ENCODE measurements at regions of chr14 and their contacts with region 1.

Region 1: GRCh38 chr14:102086972-102087761 is at the start of gene HSP90AA1:
- DNase-seq: peak; percentile 95
- ATAC-seq: peak; percentile 69
- H3K4me3 Mint-ChIP-seq: peak within 1 kb of the TSS; percentile 93
- H3K27ac Mint-ChIP-seq: peak within 1 kb of the TSS; percentile 88
- H3K4me1 Mint-ChIP-seq: peaks cover 60% of the 10 kb centered on the region
- H3K27me3 Mint-ChIP-seq: no peaks in the 10 kb centered on the region
- CTCF ChIP-seq: no peak
- total RNA-seq, gene HSP90AA1: 431 and 435 TPM in 2 replicates

Region 2: DNA sequence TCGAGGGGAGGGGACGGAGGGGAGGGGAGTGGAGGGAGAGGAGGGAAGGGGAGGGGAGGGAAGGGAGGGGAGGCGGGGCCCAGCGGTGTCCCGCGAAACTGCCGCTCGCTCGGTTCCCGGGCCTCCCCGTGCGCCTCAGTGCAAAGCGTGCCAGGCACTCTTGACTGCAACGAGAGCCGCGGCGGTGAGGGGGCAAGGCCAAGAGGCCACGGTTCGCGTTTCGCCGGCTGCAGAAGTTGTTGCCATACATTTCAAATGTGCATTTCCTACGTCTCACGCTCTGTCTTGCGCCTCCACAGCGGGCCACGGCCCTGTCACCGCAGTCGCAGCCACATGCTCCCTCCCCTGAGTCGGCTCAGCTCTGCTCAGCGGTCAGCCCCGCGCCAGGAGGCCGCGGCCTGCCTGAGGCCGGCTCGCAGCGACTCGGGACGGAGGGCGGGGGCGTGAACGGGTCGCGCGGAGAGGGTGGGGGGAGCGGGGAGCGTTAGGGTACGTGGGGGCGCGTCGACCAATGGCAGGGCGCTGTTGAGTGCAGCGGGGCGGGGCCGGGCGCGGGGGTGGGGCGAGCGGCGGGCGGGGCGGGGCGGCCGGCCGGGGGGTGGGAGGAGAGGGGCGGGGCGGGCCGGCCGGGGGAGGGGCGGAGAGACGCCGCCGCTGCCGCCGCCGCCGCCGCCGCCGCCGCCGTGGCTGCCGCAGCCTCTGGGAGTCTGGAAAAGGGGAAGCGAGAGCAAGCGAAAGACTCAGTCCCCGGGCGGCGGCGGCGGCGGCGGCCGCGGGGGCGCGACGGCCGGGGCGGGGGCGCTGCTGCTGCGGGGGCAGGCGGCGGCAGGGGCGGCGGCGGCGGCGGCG is 325.9 kb before region 1 on chr14 and contains the start of gene PPP2R5C:
- CTCF ChIA-PET with region 1: no interaction called
- POLR2A ChIA-PET with region 1: no interaction called
- intact Hi-C with region 1: loop called (anchors 1 kb)
- DNase-seq: peak; percentile 81
- ATAC-seq: peak; percentile 63
- H3K4me3 Mint-ChIP-seq: peak within 1 kb of the TSS; percentile 88
- H3K27ac Mint-ChIP-seq: peak within 1 kb of the TSS; percentile 77
- H3K4me1 Mint-ChIP-seq: peaks cover 18% of the 10 kb centered on the region
- H3K27me3 Mint-ChIP-seq: no peaks in the 10 kb centered on the region
- CTCF ChIP-seq: no peak
- total RNA-seq, gene PPP2R5C: 197 and 227 TPM in 2 replicates

Region 3: DNA sequence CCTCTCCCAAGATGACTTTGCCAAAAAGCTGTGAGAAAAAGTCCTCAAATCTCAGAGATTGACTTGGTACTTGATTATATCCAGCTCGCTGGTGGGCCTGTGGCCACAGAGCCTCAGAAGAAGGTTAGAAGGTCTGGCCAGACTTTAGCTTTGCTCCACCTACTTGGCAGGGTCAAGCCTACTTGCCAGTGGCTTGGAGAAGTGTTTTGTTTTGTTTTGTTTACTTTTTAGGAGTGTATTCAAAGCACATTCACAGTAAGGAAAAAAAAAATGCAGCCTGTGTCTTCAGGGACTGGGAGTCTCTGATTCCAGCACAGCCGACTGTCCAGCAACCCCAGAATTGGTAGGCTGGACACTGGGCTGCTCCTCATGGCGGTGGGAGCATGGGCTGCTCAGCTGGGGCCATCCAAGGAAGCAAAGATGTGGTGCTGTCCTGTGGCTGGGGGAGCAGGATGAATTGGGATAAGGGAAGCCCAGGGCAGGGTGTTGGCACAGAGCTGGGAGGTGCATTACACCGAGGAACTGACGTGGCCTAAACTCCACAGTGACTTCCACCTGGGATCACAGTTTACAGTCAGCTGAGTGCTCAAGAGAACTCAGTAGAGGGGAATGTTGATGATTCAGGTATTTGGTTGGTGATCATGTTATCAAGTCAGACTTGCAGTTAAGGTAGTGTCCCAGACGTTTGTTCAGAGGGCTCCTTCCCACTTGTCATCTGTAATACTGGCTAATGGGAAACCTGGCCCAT is 252.2 kb before region 1 on chr14:
- CTCF ChIA-PET with region 1: no interaction called
- POLR2A ChIA-PET with region 1: interaction called, 14 read pairs
- intact Hi-C with region 1: loop called (anchors 10 kb)
- DNase-seq: no peak
- ATAC-seq: no peak
- H3K4me3 Mint-ChIP-seq: no peak overlapping the region
- H3K27ac Mint-ChIP-seq: peak overlapping the region; percentile 46
- H3K4me1 Mint-ChIP-seq: peaks cover 70% of the 10 kb centered on the region
- H3K27me3 Mint-ChIP-seq: no peaks in the 10 kb centered on the region
- CTCF ChIP-seq: no peak

Region 4: DNA sequence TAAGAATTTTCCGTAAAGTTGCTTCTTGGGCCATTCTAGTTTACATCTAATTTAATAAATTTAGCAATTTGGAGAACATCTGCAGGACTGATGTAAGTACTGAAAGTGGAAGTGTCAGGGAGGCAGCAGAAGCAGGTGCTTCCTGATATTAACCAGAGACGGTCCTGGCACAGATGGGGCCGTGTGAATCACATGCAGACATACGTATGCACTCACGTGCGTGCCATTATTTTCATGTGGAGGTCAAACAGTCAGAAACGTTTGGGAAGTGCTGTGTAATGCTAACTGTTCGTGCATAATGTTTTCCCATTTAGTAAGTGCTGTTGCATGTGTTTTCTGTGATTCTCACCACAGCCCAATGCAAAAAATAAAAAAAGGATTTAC is 210.6 kb before region 1 on chr14:
- CTCF ChIA-PET with region 1: no interaction called
- POLR2A ChIA-PET with region 1: no interaction called
- intact Hi-C with region 1: loop called (anchors 2 kb)
- DNase-seq: peak; percentile 60
- ATAC-seq: peak; percentile 84
- H3K4me3 Mint-ChIP-seq: peak overlapping the region; percentile 72
- H3K27ac Mint-ChIP-seq: peak overlapping the region; percentile 96
- H3K4me1 Mint-ChIP-seq: peaks cover 84% of the 10 kb centered on the region
- H3K27me3 Mint-ChIP-seq: no peaks in the 10 kb centered on the region
- CTCF ChIP-seq: no peak

Region 5: GRCh38 chr14:102008891-102009290 is 78.3 kb before region 1 on chr14:
- CTCF ChIA-PET with region 1: no interaction called
- POLR2A ChIA-PET with region 1: no interaction called
- intact Hi-C with region 1: no loop called
- DNase-seq: no peak
- ATAC-seq: no peak
- H3K4me3 Mint-ChIP-seq: no peak overlapping the region
- H3K27ac Mint-ChIP-seq: no peak overlapping the region
- H3K4me1 Mint-ChIP-seq: no peaks in the 10 kb centered on the region
- H3K27me3 Mint-ChIP-seq: no peaks in the 10 kb centered on the region
- CTCF ChIP-seq: no peak

Region 6: GRCh38 chr14:102103062-102103695 is 16.0 kb after region 1 on chr14:
- CTCF ChIA-PET with region 1: interaction called, 3 read pairs
- POLR2A ChIA-PET with region 1: interaction called, 3 read pairs
- intact Hi-C with region 1: loop called (anchors 2 kb)
- DNase-seq: no peak
- ATAC-seq: peak; percentile 94
- H3K4me3 Mint-ChIP-seq: no peak overlapping the region
- H3K27ac Mint-ChIP-seq: peak overlapping the region; percentile 76
- H3K4me1 Mint-ChIP-seq: peaks cover 31% of the 10 kb centered on the region
- H3K27me3 Mint-ChIP-seq: no peaks in the 10 kb centered on the region
- CTCF ChIP-seq: no peak

Region 7: DNA sequence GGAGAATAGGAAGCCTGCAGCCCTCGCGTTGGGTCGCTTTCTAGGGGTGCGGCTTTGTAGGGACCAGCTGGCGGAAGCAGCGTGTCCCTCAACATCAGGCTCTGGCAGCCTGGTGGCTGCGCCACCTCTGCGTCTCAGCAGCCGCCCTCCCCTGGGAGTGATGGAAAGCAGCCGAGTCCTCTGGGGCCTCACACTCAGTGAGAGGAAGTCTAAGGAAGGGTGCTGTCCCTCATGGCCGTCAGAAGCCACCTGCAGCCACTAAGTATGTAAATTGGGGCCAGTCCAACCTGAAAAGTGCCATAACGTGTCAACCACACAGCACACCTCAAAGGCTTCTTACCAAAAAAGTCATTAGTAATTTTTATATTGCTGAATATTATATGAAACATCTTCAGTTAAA is 132.9 kb after region 1 on chr14:
- CTCF ChIA-PET with region 1: no interaction called
- POLR2A ChIA-PET with region 1: interaction called, 4 read pairs
- intact Hi-C with region 1: loop called (anchors 5 kb)
- DNase-seq: peak; percentile 52
- ATAC-seq: peak; percentile 99
- H3K4me3 Mint-ChIP-seq: no peak overlapping the region
- H3K27ac Mint-ChIP-seq: peak overlapping the region; percentile 7
- H3K4me1 Mint-ChIP-seq: peaks cover 17% of the 10 kb centered on the region
- H3K27me3 Mint-ChIP-seq: no peaks in the 10 kb centered on the region
- CTCF ChIP-seq: no peak

Region 8: GRCh38 chr14:102509744-102510615 is 422.8 kb after region 1 on chr14 and contains the start of gene ANKRD9:
- CTCF ChIA-PET with region 1: no interaction called
- POLR2A ChIA-PET with region 1: no interaction called
- intact Hi-C with region 1: loop called (anchors 10 kb)
- DNase-seq: peak; percentile 81
- ATAC-seq: peak; percentile 82
- H3K4me3 Mint-ChIP-seq: peak within 1 kb of the TSS; percentile 82
- H3K27ac Mint-ChIP-seq: no peak within 1 kb of the TSS
- H3K4me1 Mint-ChIP-seq: peaks cover 11% of the 10 kb centered on the region
- H3K27me3 Mint-ChIP-seq: peaks cover 3% of the 10 kb centered on the region
- CTCF ChIP-seq: no peak
- total RNA-seq, gene ANKRD9: 1.4 and 1.8 TPM in 2 replicates

Region 9: DNA sequence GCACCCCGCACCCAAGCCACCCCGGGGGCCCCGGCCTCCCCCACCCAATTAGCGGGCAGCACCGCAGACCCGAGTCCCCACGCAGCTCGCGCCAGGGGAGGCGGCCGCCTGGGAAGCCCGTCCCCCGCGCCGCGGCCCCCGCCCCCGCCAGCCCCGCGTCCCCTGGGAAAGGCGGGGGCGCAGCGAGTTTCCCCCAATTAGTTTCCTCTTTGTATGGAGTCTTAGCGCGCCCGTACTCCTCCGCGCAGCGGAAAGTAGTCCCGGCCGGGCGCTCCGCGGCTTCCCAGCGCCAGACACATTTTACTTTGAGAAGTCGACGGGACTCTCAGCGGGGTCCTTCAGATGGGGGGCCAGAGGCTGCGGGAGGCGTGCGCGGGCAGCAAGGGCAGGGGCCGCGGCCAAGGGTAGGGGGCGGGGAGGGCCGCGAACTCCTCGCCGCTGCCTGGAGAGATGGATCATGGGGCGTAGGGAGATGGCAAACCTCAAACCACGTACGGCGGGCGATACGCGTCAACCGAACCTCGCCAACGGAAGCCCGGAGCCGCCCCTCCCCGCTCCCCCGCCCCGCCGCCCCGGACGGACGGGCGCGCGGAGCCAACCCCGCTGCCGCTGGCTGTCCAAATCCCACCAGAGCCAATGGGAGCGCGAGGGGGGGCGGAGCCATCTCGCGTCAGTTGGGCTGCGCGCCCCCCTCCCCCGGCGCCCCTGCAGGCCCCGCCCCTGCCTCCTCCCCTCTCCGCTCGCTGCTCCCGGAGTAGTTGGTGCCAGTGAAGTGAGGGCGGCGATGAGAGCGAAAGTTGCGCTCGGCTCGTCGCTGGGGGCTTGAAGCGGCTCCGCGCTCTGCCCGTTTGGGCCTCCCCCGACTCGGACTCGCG is 505.0 kb after region 1 on chr14 and contains the start of gene RCOR1:
- CTCF ChIA-PET with region 1: no interaction called
- POLR2A ChIA-PET with region 1: no interaction called
- intact Hi-C with region 1: no loop called
- DNase-seq: peak; percentile 94
- ATAC-seq: peak; percentile 84
- H3K4me3 Mint-ChIP-seq: peak within 1 kb of the TSS; percentile 93
- H3K27ac Mint-ChIP-seq: peak within 1 kb of the TSS; percentile 97
- H3K4me1 Mint-ChIP-seq: peaks cover 26% of the 10 kb centered on the region
- H3K27me3 Mint-ChIP-seq: no peaks in the 10 kb centered on the region
- CTCF ChIP-seq: no peak
- total RNA-seq, gene RCOR1: 21.0 and 23.0 TPM in 2 replicates

Measured in activated B cell treated with CpG ODN at 0.5 μM for 24 hours (primary cell).